Right lobe of liver (tissue), 6 donors: ENCODE measurements at regions of chr2 and their contacts with region 1.

Region 1: DNA sequence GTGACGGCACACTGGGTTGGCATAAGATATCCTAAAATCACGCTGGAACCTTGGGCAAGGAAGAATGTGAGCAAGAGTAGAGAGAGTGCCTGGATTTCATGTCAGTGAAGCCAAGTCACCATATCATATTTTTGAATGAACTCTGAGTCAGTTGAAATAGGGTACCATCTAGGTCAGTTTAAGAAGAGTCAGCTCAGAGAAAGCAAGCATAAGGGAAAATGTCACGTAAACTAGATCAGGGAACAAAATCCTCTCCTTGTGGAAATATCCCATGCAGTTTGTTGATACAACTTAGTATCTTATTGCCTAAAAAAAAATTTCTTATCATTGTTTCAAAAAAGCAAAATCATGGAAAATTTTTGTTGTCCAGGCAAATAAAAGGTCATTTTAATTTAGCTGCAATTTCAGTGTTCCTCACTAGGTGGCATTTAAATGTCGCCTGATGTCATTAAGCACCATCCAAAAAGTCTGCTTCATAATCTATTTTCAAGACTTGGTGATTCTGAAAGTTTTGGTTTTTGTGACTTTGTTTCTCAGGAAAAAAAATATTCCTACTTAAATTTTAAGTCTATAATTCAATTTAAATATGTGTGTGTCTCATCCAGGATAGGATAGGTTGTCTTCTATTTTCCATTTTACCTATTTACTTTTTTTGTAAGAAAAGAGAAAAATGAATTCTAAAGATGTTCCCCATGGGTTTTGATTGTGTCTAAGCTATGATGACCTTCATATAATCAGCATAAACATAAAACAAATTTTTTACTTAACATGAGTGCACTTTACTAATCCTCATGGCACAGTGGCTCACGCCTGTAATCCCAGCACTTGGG is 19.6 kb downstream of the RSAD2 start:
- DNase-seq: no peak
- ATAC-seq: peak; percentile 66 to 89 (median 78)
- H3K4me3 ChIP-seq: no peak overlapping the region
- H3K27ac ChIP-seq: no peak overlapping the region
- H3K4me1 ChIP-seq: no peaks in the 10 kb centered on the region
- H3K27me3 ChIP-seq: no peaks in the 10 kb centered on the region
- CTCF ChIP-seq: peak; percentile 56 to 80 (median 66)
- POLR2A ChIP-seq: no peak

Region 2: GRCh38 chr2:6452702-6453481 is 444.3 kb before region 1 on chr2:
- intact Hi-C with region 1: no loop called
- DNase-seq: no peak
- ATAC-seq: no peak
- H3K4me3 ChIP-seq: no peak overlapping the region
- H3K27ac ChIP-seq: no peak overlapping the region
- H3K4me1 ChIP-seq: no peaks in the 10 kb centered on the region
- H3K27me3 ChIP-seq: no peaks in the 10 kb centered on the region
- CTCF ChIP-seq: no peak
- POLR2A ChIP-seq: no peak

Region 3: GRCh38 chr2:6855855-6856547 is 41.1 kb before region 1 on chr2:
- intact Hi-C with region 1: no loop called
- DNase-seq: no peak
- ATAC-seq: peak in 1 of 4 donors; percentile 92
- H3K4me3 ChIP-seq: no peak overlapping the region
- H3K27ac ChIP-seq: no peak overlapping the region
- H3K4me1 ChIP-seq: no peaks in the 10 kb centered on the region
- H3K27me3 ChIP-seq: no peaks in the 10 kb centered on the region
- CTCF ChIP-seq: no peak
- POLR2A ChIP-seq: no peak

Region 4: GRCh38 chr2:7037340-7038333 is 140.5 kb after region 1 on chr2:
- intact Hi-C with region 1: loop called (anchors 5 to 10 kb)
- DNase-seq: peak in 2 of 3 donors; percentile 68
- ATAC-seq: peak; percentile 81 to 93 (median 92)
- H3K4me3 ChIP-seq: no peak overlapping the region
- H3K27ac ChIP-seq: no peak overlapping the region
- H3K4me1 ChIP-seq: no peaks in the 10 kb centered on the region
- H3K27me3 ChIP-seq: no peaks in the 10 kb centered on the region
- CTCF ChIP-seq: peak; percentile 55 to 80 (median 72)
- POLR2A ChIP-seq: no peak

Region 5: DNA sequence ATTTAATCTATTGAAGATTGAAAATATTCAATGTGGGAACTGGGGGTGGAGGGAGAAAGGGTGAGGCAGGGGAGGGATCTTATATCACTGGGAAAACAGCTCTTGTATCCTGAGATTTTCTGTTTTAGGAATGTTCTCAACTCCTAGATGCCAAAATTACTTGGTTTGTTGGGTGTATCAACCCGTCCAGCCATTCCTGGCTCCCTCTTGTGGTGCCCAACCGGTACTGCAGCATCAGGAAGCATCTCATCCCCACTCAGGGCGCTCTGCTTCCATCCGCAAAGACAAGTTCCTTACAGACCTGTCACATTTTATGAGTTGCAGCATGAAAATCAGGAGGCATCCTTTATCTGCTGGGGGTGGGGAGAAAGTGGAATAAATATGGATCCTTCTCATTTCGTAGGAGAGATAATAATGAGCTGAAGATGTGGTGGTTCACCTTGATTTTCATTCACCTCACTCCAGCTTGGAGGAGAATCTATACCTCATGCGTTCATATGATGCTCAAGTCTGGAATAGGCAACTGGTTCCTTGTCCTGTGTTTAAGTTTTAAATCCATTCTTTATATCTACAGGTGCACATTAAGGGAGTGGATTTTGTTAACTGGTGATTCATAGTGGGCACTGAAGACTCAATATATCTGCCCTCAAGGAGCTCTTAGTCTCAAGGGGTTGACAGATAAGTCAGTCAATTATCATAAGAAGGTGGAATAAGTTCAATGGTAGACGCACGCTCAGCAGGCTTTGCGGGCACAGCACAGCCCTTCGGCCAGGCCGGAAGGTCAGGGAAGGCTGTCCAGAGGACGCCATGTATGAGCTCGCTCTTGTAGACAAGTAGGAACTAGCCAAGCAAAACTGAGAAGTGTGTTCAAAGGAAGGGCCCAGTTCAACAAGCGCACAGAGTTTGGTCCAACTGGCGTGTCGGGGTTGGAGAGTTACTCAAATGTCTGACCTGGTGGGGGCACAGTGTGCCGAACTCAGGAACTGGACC is 147.4 kb after region 1 on chr2:
- intact Hi-C with region 1: loop called (anchors 5 to 10 kb)
- DNase-seq: peak; percentile 65 to 78 (median 68)
- ATAC-seq: peak; percentile 93 to 97 (median 96)
- H3K4me3 ChIP-seq: no peak overlapping the region
- H3K27ac ChIP-seq: no peak overlapping the region
- H3K4me1 ChIP-seq: no peaks in the 10 kb centered on the region
- H3K27me3 ChIP-seq: no peaks in the 10 kb centered on the region
- CTCF ChIP-seq: peak; percentile 90 to 94 (median 94)
- POLR2A ChIP-seq: no peak

Region 6: DNA sequence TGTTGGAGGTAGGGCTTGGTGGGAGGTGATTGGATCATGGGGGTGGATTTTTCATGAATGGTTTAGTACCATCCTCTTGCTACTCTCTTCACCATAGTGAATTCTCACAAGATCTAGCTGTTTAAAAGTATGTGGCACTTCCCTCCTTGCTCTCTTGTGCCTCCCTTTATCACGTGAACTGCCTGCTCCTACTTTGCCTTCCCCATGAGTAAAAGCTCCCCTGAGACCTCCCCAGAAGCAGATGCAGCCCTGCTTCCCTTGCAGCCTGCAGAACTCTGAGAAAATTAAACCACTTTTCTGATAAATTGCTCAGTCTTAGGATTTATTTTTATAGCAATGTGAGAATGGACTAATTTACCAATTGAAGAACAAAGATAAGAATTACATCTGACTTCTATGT is 243.2 kb after region 1 on chr2:
- intact Hi-C with region 1: no loop called
- DNase-seq: no peak
- ATAC-seq: no peak
- H3K4me3 ChIP-seq: no peak overlapping the region
- H3K27ac ChIP-seq: no peak overlapping the region
- H3K4me1 ChIP-seq: no peaks in the 10 kb centered on the region
- H3K27me3 ChIP-seq: no peaks in the 10 kb centered on the region
- CTCF ChIP-seq: no peak
- POLR2A ChIP-seq: no peak